WTC11 (cell line): ENCODE measurements at regions of chr11 and their contacts with region 1.

Region 1: DNA sequence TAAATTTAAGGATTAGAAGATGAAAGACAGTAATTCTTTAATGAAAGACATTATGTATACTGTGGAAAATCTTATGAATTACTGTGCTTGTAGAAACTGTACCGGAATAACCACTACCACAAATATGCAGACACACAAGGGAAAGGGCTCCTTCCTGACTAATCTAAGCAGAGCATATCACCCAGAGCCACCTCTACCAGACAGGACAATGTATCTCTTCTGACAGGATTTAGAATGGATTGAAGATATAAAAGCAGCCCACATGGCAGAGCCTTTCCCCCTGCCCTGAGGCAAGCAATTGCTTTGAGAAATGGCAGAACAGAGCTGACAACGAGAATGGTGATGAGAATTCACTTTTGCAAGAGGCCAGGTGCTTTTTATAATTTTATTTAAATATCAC is 144.1 kb downstream of the NOX4 start:
- DNase-seq: no peak
- ATAC-seq: no peak
- H3K4me3 Mint-ChIP-seq: no peak overlapping the region
- H3K27ac Mint-ChIP-seq: no peak overlapping the region
- H3K4me1 Mint-ChIP-seq: peaks cover 9% of the 10 kb centered on the region
- H3K27me3 Mint-ChIP-seq: no peaks in the 10 kb centered on the region
- CTCF ChIP-seq: no peak

Region 2: GRCh38 chr11:89327885-89328284 is 19.2 kb before region 1 on chr11:
- CTCF ChIA-PET with region 1: no interaction called
- POLR2A ChIA-PET with region 1: interaction called, 11 read pairs
- DNase-seq: no peak
- ATAC-seq: peak; percentile 83
- H3K4me3 Mint-ChIP-seq: no peak overlapping the region
- H3K27ac Mint-ChIP-seq: no peak overlapping the region
- H3K4me1 Mint-ChIP-seq: peaks cover 26% of the 10 kb centered on the region
- H3K27me3 Mint-ChIP-seq: no peaks in the 10 kb centered on the region
- CTCF ChIP-seq: no peak

Region 3: GRCh38 chr11:89490981-89491690 is 144.1 kb after region 1 on chr11 and contains the start of gene NOX4:
- CTCF ChIA-PET with region 1: no interaction called
- POLR2A ChIA-PET with region 1: no interaction called
- DNase-seq: peak; percentile 75
- ATAC-seq: peak; percentile 93
- H3K4me3 Mint-ChIP-seq: peak within 1 kb of the TSS; percentile 79
- H3K27ac Mint-ChIP-seq: no peak within 1 kb of the TSS
- H3K4me1 Mint-ChIP-seq: peaks cover 29% of the 10 kb centered on the region
- H3K27me3 Mint-ChIP-seq: peaks cover 6% of the 10 kb centered on the region; the same call in 1 of the 2 replicates
- CTCF ChIP-seq: no peak
- total RNA-seq, gene NOX4: 0.78 to 1.5 TPM (median 1.1 TPM) in 3 replicates